Activated T-helper 1 cell treated with anti-CD3 and anti-CD28 coated beads, Interleukin-12 subunit alpha, Interleukin-12 subunit beta, Interleukin-2, Interleukin-4 antibody, amounts not matched to agents 30 ng/mL and 10 ng/mL and 1 ng/mL, durations not matched to agents 14 hours and 24 hours and 36 hours (primary cell): ENCODE measurements at regions of chr6 and their contacts with region 1.

Region 1: GRCh38 chr6:144726129-144726522 is 441.0 kb downstream of the UTRN start:
- DNase-seq: no peak
- H3K4me3 Mint-ChIP-seq: no peak overlapping the region
- H3K27ac Mint-ChIP-seq: no peak overlapping the region
- H3K4me1 Mint-ChIP-seq: peaks cover 54% of the 10 kb centered on the region
- H3K27me3 Mint-ChIP-seq: no peaks in the 10 kb centered on the region

Region 2: DNA sequence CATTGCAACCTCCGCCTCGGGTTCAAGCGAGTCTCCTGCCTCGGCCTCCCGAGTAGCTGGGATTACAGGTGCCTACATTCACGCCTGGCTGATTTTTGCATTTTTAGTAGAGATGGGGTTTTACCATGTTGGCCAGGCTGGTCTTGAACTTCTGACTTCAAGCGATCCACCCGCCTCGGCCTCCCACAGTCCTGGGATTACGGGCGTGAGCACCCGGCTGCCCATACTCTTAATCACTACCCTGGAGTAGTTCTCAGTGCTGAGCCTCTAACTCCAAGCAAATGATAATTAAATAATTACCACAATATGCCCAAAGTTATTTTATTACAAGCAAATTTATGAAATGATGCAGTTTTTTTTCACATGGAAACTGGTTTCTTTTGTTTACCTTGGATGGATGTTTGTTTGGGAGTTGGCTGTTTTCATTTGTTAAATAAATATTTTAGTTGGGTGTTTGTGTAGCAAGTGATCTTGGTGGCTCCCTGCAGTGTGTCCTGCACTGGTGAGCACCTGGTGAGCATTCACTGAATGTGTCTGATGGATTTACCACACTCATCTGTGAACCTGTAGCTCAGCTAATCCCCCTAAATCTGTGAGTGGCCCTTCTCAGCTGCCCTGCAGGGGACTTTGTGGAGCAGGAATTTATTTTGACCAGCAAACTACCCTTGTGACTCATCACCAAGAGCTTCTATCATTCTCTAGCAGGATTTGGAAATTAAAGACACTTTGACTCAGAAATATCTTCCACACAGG is 404.1 kb before region 1 on chr6:
- intact Hi-C with region 1: no loop called
- DNase-seq: no peak
- H3K4me3 Mint-ChIP-seq: no peak overlapping the region
- H3K27ac Mint-ChIP-seq: no peak overlapping the region
- H3K4me1 Mint-ChIP-seq: peaks cover 12% of the 10 kb centered on the region
- H3K27me3 Mint-ChIP-seq: peaks cover 13% of the 10 kb centered on the region

Region 3: DNA sequence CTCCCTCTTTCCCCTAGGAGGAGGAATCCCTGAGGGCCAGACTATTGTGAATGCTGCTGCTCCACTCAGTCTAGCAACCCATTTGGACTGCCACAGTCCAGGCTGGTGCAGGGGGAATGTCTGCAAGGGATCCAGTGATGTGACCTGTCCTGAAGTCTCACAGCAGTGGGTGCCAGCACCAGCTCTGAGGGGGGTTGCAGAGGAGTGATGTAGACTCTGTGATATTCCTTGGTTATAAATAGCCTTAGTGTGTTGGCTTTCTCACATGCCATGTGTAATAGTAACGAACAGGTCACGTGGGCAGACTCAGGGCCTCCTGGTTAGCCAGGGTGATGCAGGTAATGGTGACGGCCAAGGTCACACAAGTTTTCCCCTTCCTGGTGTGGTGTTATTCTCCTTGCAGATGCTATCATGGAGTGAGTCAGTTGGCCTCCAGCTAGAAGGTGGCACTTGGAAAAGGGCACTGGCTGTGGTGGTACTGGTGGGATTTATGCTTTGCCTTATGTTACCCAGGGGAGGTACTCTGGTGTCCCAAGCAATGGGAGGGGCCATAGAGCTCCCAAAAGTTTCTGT is 36.5 kb before region 1 on chr6:
- intact Hi-C with region 1: loop called (anchors 5 kb)
- DNase-seq: no peak
- H3K4me3 Mint-ChIP-seq: no peak overlapping the region
- H3K27ac Mint-ChIP-seq: no peak overlapping the region
- H3K4me1 Mint-ChIP-seq: no peaks in the 10 kb centered on the region
- H3K27me3 Mint-ChIP-seq: no peaks in the 10 kb centered on the region

Region 4: GRCh38 chr6:144736763-144737162 is 10.6 kb after region 1 on chr6:
- intact Hi-C with region 1: no loop called
- DNase-seq: no peak
- H3K4me3 Mint-ChIP-seq: no peak overlapping the region
- H3K27ac Mint-ChIP-seq: no peak overlapping the region
- H3K4me1 Mint-ChIP-seq: no peaks in the 10 kb centered on the region
- H3K27me3 Mint-ChIP-seq: no peaks in the 10 kb centered on the region

Region 5: DNA sequence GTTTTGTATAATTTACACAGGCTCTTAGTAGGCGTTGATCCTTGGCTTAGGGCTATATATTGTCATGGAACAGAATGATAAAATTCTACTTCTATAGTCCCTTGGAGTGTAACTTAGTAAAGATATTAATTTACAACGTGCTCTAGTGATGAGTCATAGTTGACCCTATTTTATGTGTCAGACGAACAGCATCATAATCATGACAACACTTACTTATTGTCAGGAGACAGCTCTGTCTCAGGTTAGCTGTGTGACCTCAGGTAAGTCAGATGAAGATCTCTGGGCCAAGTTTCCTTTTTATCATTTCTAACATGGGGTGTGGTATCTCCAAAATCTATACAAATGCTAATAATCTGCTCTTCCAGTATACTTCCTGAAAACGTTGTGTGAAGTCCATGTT is 32.5 kb after region 1 on chr6:
- intact Hi-C with region 1: no loop called
- DNase-seq: no peak
- H3K4me3 Mint-ChIP-seq: no peak overlapping the region
- H3K27ac Mint-ChIP-seq: no peak overlapping the region
- H3K4me1 Mint-ChIP-seq: no peaks in the 10 kb centered on the region
- H3K27me3 Mint-ChIP-seq: no peaks in the 10 kb centered on the region